ENCODE measurements at regions of chr6 and their contacts with region 1.

Region 1: GRCh38 chr6:135088818-135089809 is 34.5 kb upstream of the HBS1L start:
- DNase-seq: peak; percentile 67
- ATAC-seq: peak; percentile 78
- H3K4me3 Mint-ChIP-seq: peak overlapping the region; percentile 43
- H3K27ac Mint-ChIP-seq: peak overlapping the region; percentile 89
- H3K4me1 Mint-ChIP-seq: peaks cover 86% of the 10 kb centered on the region
- H3K27me3 Mint-ChIP-seq: no peaks in the 10 kb centered on the region
- CTCF ChIP-seq: peak; percentile 93

Region 2: DNA sequence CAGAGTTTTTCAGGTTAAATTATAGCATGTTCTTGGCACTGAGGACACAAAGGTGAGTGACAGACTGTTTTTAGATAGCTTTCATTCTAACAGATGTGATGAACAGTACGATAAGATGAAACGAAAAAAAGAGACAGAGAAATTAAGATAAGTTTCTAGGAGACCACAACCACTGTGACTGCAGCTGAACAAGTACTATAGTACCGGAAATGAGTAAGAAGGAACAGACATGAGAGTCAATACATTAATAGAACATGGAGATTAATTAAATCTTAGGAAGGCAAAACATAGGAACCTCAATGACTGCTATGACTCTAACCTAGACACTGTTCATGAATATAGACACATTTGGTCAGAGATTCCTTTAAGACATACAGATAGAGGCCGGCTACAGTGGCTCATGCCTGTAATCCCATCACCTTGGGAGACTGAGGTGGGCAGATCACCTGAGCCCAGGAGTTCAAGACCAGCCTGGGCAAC is 74.7 kb before region 1 on chr6:
- CTCF ChIA-PET with region 1: interaction called, 4 read pairs
- POLR2A ChIA-PET with region 1: interaction called, 3 read pairs
- intact Hi-C with region 1: loop called (anchors 5 kb)
- DNase-seq: peak; percentile 50
- ATAC-seq: peak; percentile 92
- H3K4me3 Mint-ChIP-seq: peak overlapping the region; percentile 50
- H3K27ac Mint-ChIP-seq: peak overlapping the region; percentile 83
- H3K4me1 Mint-ChIP-seq: peaks cover 64% of the 10 kb centered on the region
- H3K27me3 Mint-ChIP-seq: no peaks in the 10 kb centered on the region
- CTCF ChIP-seq: no peak

Region 3: GRCh38 chr6:135054569-135055498 is 34.3 kb before region 1 on chr6 and contains the start of gene HBS1L:
- CTCF ChIA-PET with region 1: interaction called, 14 read pairs
- POLR2A ChIA-PET with region 1: interaction called, 12 read pairs
- intact Hi-C with region 1: loop called (anchors 5 kb)
- DNase-seq: peak; percentile 98
- ATAC-seq: peak; percentile 97
- H3K4me3 Mint-ChIP-seq: peak within 1 kb of the TSS; percentile 96
- H3K27ac Mint-ChIP-seq: peak within 1 kb of the TSS; percentile 99
- H3K4me1 Mint-ChIP-seq: peaks cover 25% of the 10 kb centered on the region
- H3K27me3 Mint-ChIP-seq: no peaks in the 10 kb centered on the region
- CTCF ChIP-seq: no peak
- total RNA-seq, gene HBS1L: 146 to 147 TPM

Region 4: DNA sequence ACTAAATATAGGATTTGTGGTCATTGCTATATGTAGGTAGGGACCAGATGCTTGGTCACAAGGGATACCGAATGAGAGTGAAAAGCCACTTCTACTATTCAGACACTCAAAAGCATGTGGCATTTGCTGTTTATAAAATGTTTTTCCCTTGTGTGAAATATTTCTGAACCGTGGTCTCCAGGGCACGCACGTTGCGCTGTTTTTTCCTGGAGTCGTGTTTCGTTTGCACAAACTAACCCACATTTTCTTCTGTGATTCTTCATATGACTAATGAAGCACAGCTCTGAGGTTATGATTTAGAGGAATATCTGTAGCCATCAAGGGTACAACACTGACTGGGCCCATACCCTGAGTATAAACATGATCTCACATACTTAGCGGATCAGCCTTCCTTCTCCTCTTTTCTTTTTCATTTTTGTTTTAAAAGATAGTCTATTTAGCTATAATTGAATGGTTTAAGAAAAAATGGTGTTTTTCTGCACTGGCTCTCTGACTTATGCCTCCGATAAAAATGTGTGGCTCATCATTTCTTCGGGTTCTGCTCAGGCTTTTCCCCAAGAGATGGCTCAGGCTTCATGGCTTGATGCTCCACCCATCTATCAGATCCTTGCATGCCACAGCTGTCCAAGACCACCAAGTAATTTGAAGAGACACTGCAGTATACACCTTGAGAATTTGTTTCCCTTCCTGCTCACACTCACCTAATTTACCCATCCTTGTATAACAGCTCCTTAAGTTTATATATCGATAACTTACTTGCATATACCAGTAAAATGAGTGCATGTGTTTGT is 25.4 kb after region 1 on chr6:
- CTCF ChIA-PET with region 1: interaction called, 13 read pairs
- POLR2A ChIA-PET with region 1: interaction called, 13 read pairs
- intact Hi-C with region 1: loop called (anchors 2 kb)
- DNase-seq: peak; percentile 84
- ATAC-seq: peak; percentile 72
- H3K4me3 Mint-ChIP-seq: peak overlapping the region; percentile 7
- H3K27ac Mint-ChIP-seq: peak overlapping the region; percentile 91
- H3K4me1 Mint-ChIP-seq: peaks cover 79% of the 10 kb centered on the region
- H3K27me3 Mint-ChIP-seq: no peaks in the 10 kb centered on the region
- CTCF ChIP-seq: no peak

Region 5: GRCh38 chr6:135358251-135358821 is 269.2 kb after region 1 on chr6:
- CTCF ChIA-PET with region 1: no interaction called
- POLR2A ChIA-PET with region 1: no interaction called
- intact Hi-C with region 1: no loop called
- DNase-seq: no peak
- ATAC-seq: no peak
- H3K4me3 Mint-ChIP-seq: no peak overlapping the region
- H3K27ac Mint-ChIP-seq: peak overlapping the region; percentile 25
- H3K4me1 Mint-ChIP-seq: peaks cover 8% of the 10 kb centered on the region
- H3K27me3 Mint-ChIP-seq: no peaks in the 10 kb centered on the region
- CTCF ChIP-seq: no peak